ENCODE measurements at regions of chr11 and their contacts with region 1.

Region 1: GRCh38 chr11:1682225-1682905 is 14.6 kb upstream of the KRTAP5-6 start:
- DNase-seq: no peak
- H3K4me3 ChIP-seq: no peak overlapping the region
- H3K27ac ChIP-seq: no peak overlapping the region
- H3K4me1 ChIP-seq: no peaks in the 10 kb centered on the region
- H3K27me3 ChIP-seq: peaks cover 3% of the 10 kb centered on the region
- CTCF ChIP-seq: no peak

Region 2: GRCh38 chr11:1515082-1516060 is 167.0 kb before region 1 on chr11:
- CTCF ChIA-PET with region 1: no interaction called
- dilution Hi-C with region 1: no loop called
- in situ Hi-C with region 1: no loop called
- intact Hi-C with region 1: no loop called
- DNase-seq: peak; percentile 30
- H3K4me3 ChIP-seq: no peak overlapping the region
- H3K27ac ChIP-seq: no peak overlapping the region
- H3K4me1 ChIP-seq: peaks cover 4% of the 10 kb centered on the region
- H3K27me3 ChIP-seq: no peaks in the 10 kb centered on the region
- CTCF ChIP-seq: peak; percentile 81 to 92

Region 3: GRCh38 chr11:1623716-1624115 is 58.6 kb before region 1 on chr11:
- CTCF ChIA-PET with region 1: no interaction called
- dilution Hi-C with region 1: loop called (anchors 5 kb)
- in situ Hi-C with region 1: no loop called
- intact Hi-C with region 1: no loop called
- DNase-seq: no peak
- H3K4me3 ChIP-seq: no peak overlapping the region
- H3K27ac ChIP-seq: no peak overlapping the region
- H3K4me1 ChIP-seq: no peaks in the 10 kb centered on the region
- H3K27me3 ChIP-seq: peaks cover 6% of the 10 kb centered on the region
- CTCF ChIP-seq: no peak

Region 4: DNA sequence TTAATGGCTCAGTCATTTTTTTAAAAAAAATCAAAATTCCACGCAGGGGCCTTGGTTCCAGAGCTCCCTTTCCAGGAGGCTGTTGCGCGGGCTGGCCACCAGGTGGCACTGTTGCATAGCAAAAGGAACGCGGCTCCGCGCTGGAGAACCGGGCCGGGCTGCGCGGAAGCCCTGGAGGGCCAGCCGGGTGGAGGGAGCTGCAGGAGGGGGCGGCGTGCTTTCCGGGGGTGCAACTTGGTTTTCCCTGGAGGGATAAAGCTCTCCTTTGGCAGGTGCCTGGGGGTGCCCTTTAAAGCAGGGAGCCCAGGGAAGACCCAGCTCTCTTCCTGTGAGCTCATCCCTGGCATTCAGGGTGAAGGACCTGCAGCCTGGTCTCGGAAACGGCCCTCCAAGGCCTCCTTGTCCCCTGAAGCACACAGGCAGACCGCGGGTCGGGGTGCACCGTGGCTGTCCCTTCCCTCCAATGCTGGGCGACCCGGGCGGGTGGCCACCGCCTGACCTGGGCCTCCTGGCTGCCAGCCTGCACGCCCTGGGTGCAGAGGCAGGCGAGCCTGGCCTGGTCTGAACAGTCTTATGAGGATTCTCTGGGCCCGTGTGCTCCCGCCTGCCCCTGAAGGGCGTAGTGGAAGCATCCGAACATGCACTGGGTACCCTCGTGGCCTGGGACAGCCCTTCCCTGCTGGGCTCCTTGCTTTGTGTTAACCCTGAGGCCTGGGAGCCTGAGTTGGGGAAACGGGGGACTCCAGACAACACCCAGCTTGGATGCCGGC is 29.4 kb before region 1 on chr11:
- CTCF ChIA-PET with region 1: no interaction called
- dilution Hi-C with region 1: no loop called
- in situ Hi-C with region 1: no loop called
- intact Hi-C with region 1: no loop called
- DNase-seq: peak; percentile 20
- H3K4me3 ChIP-seq: no peak overlapping the region
- H3K27ac ChIP-seq: no peak overlapping the region
- H3K4me1 ChIP-seq: peaks cover 23% of the 10 kb centered on the region
- H3K27me3 ChIP-seq: no peaks in the 10 kb centered on the region
- CTCF ChIP-seq: peak; percentile 79 to 93

Region 5: DNA sequence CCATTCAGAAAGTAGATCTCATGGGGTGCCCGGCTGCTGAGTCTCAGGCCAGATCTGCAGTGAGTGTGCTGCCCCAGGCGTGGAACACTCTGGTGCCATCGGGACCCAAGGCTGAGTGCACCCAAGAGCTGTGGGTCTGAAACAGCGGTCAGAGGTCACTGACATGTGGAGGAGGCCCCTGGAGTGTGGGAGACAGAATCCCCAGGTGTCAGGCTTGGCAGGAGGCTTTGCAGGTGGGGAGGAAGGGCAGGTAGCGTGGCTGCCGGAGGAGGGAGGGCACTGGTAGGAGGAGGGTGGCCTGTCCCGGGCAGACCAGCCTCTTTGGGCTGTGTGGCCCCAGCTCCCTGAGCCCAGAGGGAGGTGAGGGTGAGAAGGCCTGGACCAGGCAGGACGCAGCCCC is 17.1 kb before region 1 on chr11:
- CTCF ChIA-PET with region 1: no interaction called
- dilution Hi-C with region 1: no loop called
- in situ Hi-C with region 1: no loop called
- intact Hi-C with region 1: loop called (anchors 2 kb)
- DNase-seq: no peak
- H3K4me3 ChIP-seq: no peak overlapping the region
- H3K27ac ChIP-seq: no peak overlapping the region
- H3K4me1 ChIP-seq: peaks cover 4% of the 10 kb centered on the region
- H3K27me3 ChIP-seq: no peaks in the 10 kb centered on the region
- CTCF ChIP-seq: no peak